ENCODE measurements at regions of chr2 and their contacts with region 1.

Region 1: GRCh38 chr2:15359716-15360531 is 201.2 kb downstream of the NBAS start:
- DNase-seq: no peak
- H3K4me3 ChIP-seq: no peak overlapping the region
- H3K27ac ChIP-seq: no peak overlapping the region
- H3K4me1 ChIP-seq: no peaks in the 10 kb centered on the region
- H3K27me3 ChIP-seq: no peaks in the 10 kb centered on the region

Region 2: DNA sequence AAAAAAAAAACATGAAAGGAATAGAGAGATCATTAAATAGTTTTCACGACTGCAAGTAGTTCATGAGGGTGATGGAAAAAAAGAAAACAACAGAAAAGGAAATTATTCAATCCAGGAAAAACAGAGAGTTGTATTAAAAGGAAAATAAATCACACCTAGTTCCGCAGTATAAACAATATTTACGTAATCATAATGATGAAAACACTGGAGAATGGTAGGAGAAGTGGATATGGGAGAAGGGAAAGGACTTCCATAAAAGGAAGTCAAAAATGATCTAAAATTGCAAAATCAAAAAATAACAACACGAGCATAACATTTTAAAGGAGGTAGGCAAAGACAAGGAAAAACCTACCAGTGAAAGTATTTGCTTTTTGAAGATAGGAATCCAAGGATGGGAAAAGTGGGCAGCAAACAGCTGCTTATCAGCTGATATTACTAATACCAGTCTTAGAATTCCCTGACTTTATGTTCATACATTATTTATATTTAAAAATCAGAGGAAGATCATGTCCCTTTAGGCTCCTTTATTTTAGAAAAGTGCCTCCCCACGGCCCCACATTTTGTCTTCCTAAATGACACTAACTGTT is 40.4 kb after region 1 on chr2:
- CTCF ChIA-PET with region 1: no interaction called
- POLR2A ChIA-PET with region 1: no interaction called
- DNase-seq: no peak
- H3K4me3 ChIP-seq: no peak overlapping the region
- H3K27ac ChIP-seq: no peak overlapping the region
- H3K4me1 ChIP-seq: no peaks in the 10 kb centered on the region
- H3K27me3 ChIP-seq: no peaks in the 10 kb centered on the region

Region 3: DNA sequence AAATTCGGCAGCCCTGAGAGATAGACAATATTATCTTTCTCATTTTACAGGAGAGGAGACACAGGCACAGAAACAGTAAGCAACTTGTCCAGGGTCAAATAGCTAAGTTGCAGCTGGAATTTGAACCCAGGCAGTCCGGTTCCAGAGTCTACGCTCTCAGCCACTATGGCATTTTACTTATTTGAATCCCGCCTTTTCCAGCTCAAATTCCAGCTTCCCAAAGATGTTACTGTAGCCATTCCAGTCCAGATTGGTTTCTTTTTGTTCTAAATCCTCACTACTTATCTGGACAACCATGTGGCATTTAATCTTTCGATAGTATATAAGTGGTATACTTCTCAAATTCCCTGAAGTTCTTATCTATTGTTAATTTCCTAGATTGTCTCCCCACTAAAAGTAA is 75.5 kb after region 1 on chr2:
- CTCF ChIA-PET with region 1: no interaction called
- POLR2A ChIA-PET with region 1: interaction called, 10 read pairs
- DNase-seq: no peak
- H3K4me3 ChIP-seq: no peak overlapping the region
- H3K27ac ChIP-seq: no peak overlapping the region
- H3K4me1 ChIP-seq: peaks cover 0 to 3% (median 0%) of the 10 kb centered on the region in 4 experiments
- H3K27me3 ChIP-seq: no peaks in the 10 kb centered on the region